ENCODE measurements at regions of chr11 and their contacts with region 1.

Region 1: DNA sequence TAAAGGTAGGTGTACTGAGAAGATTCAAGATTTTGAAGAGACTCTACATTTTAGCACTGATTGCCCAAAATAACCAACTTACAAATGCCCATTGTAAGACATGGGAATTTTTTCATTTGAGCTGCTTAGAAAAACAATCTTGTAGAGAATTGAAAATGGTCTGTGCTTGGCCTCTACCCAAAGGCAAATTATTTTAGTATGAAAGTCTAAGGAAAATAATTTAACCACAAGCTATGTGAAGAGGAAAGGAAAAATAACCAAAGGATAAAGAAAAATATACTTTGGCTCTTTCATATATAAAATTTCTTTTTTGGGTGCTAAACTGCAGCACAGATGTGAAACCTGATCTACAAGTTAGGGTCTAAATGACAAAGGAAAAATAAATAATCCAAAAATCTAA is 54.9 kb downstream of the ME3 start:
- DNase-seq: no peak
- H3K27ac ChIP-seq: no peak overlapping the region
- CTCF ChIP-seq: no peak

Region 2: DNA sequence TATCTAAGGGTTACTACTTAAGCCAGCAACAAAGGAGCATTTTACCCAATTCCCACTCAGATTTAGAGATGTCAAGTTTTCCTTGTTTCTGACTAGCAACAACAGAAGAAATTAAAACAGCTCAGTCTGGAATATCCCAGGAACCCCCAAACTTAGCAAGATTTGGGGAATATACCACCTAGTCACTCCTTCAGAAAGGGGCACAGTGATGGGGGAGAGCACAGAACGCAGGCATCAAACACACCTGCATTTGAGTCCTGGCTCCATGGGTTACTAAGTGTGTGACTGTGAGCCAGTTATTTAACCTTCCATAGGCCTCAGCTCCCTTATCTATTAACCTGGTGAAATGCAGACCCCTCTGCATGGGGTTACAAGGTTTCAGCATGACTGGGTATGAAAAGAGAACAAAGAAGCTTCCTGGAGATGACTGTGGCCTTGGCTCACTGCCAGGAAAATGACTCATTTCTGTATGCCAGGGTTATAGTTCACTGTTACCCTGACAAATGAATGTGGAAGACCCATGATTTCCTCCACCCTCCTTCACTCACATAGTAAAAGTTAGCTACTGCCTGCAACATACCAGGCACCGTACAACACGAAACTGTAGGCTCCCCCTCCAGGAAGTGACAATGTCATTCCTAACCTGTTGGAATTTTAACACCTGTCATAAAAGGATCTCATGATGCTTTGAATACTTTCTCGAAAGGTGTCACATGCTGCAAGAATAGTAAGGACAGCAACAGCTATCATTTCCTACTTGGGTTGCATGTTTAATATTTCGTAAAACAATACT is 24.6 kb before region 1 on chr11:
- CTCF ChIA-PET with region 1: interaction called, 10 read pairs
- POLR2A ChIA-PET with region 1: no interaction called
- DNase-seq: peak; percentile 87
- H3K27ac ChIP-seq: no peak overlapping the region
- CTCF ChIP-seq: no peak